ENCODE measurements at regions of chr1 and their contacts with region 1.

Region 1: GRCh38 chr1:246897302-246897701 is 34.4 kb downstream of the AHCTF1 start:
- DNase-seq: no peak
- ATAC-seq: no peak
- H3K4me3 ChIP-seq: no peak overlapping the region
- H3K27ac ChIP-seq: no peak overlapping the region
- H3K4me1 ChIP-seq: no peaks in the 10 kb centered on the region
- H3K27me3 ChIP-seq: no peaks in the 10 kb centered on the region
- CTCF ChIP-seq: no peak
- POLR2A ChIP-seq: no peak

Region 2: DNA sequence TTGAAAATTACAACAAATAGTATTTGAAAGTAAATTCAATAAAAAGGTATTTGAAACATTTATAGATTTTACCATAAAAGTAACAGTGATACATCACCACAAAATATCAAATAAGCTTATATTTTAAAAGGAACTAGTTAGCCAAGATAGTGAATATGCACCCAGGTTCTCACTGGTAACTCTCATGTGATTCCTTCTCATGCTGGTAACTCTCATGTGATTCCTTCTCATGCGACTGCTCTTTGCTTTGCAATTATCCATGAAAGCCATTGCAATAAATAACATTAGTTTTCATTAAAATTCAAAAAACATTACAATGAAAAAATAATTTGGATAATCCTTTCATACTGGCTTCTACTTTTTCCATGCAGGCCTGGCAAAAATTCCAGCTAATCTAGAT is 40.9 kb before region 1 on chr1:
- intact Hi-C with region 1: loop called in 1 of 10 experiments (anchors 5 kb)
- DNase-seq: no peak
- ATAC-seq: no peak
- H3K4me3 ChIP-seq: no peak overlapping the region
- H3K27ac ChIP-seq: no peak overlapping the region
- H3K4me1 ChIP-seq: peaks cover 0 to 2% (median 0%) of the 10 kb centered on the region in 12 donors
- H3K27me3 ChIP-seq: no peaks in the 10 kb centered on the region
- CTCF ChIP-seq: no peak
- POLR2A ChIP-seq: no peak

Measured in heart left ventricle (tissue), 16 donors.